AG04450 (cell line): ENCODE measurements at regions of chr10 and their contacts with region 1.

Region 1: GRCh38 chr10:77501152-77501845 is 136.3 kb downstream of the KCNMA1 start:
- DNase-seq: peak; percentile 63
- H3K4me3 ChIP-seq: no peak overlapping the region
- H3K27ac ChIP-seq: peak overlapping the region; percentile 83
- H3K27me3 ChIP-seq: no peaks in the 10 kb centered on the region
- CTCF ChIP-seq: no peak

Region 2: DNA sequence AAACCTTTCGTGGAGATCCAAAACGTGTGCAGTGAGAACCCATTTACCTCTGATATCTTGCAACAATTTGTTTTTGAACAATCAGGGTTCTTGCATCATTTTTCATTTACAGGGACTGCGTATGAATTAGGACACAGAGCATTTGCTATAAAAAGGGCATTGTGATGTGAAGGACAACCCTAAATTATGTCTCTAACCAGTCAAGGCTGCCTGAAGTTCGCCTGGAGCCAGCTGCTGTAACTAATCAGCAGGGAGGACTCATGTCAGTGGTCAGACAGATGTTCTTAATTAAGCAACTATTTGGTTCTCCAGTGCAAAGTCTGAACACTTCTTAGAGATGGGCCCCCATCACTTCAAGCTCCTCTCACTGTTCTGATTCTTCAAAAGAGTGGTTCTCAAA is 538.4 kb before region 1 on chr10:
- CTCF ChIA-PET with region 1: no interaction called
- POLR2A ChIA-PET with region 1: no interaction called
- DNase-seq: no peak
- H3K4me3 ChIP-seq: no peak overlapping the region
- H3K27ac ChIP-seq: peak overlapping the region; percentile 25
- H3K27me3 ChIP-seq: no peaks in the 10 kb centered on the region
- CTCF ChIP-seq: no peak

Region 3: GRCh38 chr10:77513781-77514331 is 12.6 kb after region 1 on chr10:
- CTCF ChIA-PET with region 1: no interaction called
- POLR2A ChIA-PET with region 1: no interaction called
- DNase-seq: peak; percentile 58
- H3K4me3 ChIP-seq: no peak overlapping the region
- H3K27ac ChIP-seq: peak overlapping the region; percentile 70
- H3K27me3 ChIP-seq: no peaks in the 10 kb centered on the region
- CTCF ChIP-seq: no peak

Region 4: DNA sequence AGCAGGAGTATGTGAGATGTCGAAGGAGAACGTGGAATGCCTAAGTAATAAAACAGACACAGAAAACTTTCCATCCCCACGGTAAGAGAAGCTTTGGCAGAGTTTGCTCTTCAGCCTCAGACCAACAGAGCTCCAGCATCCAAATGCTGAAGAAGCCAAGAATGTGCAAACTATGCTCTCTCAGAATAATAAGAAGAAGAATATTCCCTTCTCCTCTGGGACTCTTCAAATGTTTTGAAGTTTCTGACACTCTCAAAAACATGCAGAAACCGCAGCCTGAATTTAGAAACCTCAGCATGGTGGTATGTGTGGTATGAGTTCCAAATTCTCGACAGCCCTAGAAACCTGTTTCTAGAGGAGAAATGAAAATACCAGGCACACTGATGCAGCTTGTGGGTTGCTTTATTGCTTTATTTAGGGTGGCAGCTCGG is 23.0 kb after region 1 on chr10:
- CTCF ChIA-PET with region 1: no interaction called
- POLR2A ChIA-PET with region 1: interaction called, 13 read pairs
- DNase-seq: peak; percentile 81
- H3K4me3 ChIP-seq: peak overlapping the region; percentile 18; the same call in 1 of the 2 replicates
- H3K27ac ChIP-seq: peak overlapping the region; percentile 86
- H3K27me3 ChIP-seq: no peaks in the 10 kb centered on the region
- CTCF ChIP-seq: no peak

Region 5: DNA sequence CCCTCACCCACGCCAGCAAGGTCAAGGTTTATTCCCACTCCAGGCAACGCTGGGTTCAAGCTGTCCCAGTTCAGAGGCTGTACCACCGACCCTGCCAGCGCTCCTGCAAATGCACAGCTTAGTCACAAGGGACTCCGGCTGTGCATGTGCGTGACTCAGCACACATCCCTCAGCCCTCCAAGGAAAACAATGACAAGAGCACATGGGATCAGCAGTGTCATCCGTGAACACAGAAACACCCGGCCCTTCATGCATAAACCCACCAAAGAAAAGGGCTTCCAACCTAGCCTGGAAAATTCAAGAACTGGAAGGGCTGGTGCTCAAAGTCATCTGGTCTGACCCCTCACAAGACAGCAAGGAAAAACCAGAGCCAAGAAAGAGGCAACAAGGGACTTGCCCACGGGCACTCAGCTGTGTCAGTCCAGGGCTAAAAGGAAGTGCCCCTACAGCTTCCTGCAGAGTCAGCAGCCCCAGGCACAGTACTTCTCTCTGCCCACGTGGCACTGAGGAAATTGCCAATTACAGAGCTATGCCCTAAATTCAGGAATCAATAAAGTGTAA is 30.2 kb after region 1 on chr10:
- CTCF ChIA-PET with region 1: no interaction called
- POLR2A ChIA-PET with region 1: interaction called, 17 read pairs
- DNase-seq: peak; percentile 50
- H3K4me3 ChIP-seq: peak overlapping the region; percentile 29; the same call in 1 of the 2 replicates
- H3K27ac ChIP-seq: peak overlapping the region; percentile 98
- H3K27me3 ChIP-seq: no peaks in the 10 kb centered on the region
- CTCF ChIP-seq: no peak

Region 6: DNA sequence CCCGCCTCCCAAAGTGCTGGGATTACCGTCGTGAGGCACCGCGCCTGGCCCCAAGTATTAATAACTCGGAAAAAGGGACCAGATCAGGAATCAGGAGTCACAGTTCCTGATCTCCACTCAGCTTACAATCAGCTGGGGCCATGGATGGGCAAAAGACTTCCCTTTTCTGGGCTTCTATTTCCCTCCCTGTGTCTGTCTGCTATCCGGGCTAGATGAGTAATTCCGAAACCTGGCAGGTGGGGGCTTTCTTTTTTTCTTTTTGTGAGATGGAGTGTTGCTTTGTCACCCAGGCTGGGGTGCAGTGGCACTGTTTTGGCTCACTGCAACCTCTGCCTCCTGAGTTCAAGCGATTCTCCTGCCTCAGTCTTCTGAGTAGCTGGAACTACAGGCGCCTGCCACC is 543.9 kb after region 1 on chr10:
- CTCF ChIA-PET with region 1: no interaction called
- POLR2A ChIA-PET with region 1: no interaction called
- DNase-seq: no peak
- H3K4me3 ChIP-seq: no peak overlapping the region
- H3K27ac ChIP-seq: no peak overlapping the region
- H3K27me3 ChIP-seq: no peaks in the 10 kb centered on the region
- CTCF ChIP-seq: no peak